Ascending aorta (tissue), 2 donors: ENCODE measurements at regions of chr12 and their contacts with region 1.

Region 1: DNA sequence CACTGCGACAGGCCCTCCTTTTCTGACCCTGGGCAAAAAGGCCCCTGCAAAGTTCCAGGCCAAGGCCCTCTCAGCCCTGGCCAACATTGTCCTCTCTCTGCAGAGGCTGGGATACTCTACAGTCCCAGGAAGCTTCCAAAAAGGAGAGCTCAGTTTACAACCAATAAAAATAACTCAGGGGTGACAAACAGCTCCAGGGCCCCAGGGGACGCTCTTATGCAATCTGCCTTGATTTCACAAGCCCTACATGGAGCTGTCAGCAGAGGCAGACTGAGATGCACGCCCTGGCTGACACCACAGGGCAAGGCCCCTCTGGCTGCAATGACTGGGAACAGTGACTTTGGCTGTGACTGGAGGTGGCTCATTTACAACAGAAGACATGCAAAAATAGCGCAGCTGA is 129.0 kb upstream of the MED13L start:
- DNase-seq: peak; percentile 84 to 97
- H3K4me3 ChIP-seq: no peak overlapping the region
- H3K27ac ChIP-seq: peak overlapping the region; percentile 34 to 60
- H3K4me1 ChIP-seq: peaks cover 8 to 36% of the 10 kb centered on the region in 2 donors
- H3K27me3 ChIP-seq: no peaks in the 10 kb centered on the region
- CTCF ChIP-seq: peak in 1 of 3 experiments; percentile 22

Region 2: GRCh38 chr12:116346741-116347140 is 59.8 kb before region 1 on chr12:
- intact Hi-C with region 1: loop called (anchors 2 kb)
- DNase-seq: peak in 1 of 2 donors; percentile 72
- H3K4me3 ChIP-seq: no peak overlapping the region
- H3K27ac ChIP-seq: no peak overlapping the region
- H3K4me1 ChIP-seq: peaks cover 2 to 15% of the 10 kb centered on the region in 2 donors
- H3K27me3 ChIP-seq: no peaks in the 10 kb centered on the region
- CTCF ChIP-seq: no peak

Region 3: GRCh38 chr12:116389990-116390389 is 16.5 kb before region 1 on chr12:
- intact Hi-C with region 1: loop called (anchors 1 kb)
- DNase-seq: peak in 1 of 2 donors; percentile 78
- H3K4me3 ChIP-seq: no peak overlapping the region
- H3K27ac ChIP-seq: peak overlapping the region; percentile 56 to 61
- H3K4me1 ChIP-seq: peaks cover 11 to 19% of the 10 kb centered on the region in 2 donors
- H3K27me3 ChIP-seq: no peaks in the 10 kb centered on the region
- CTCF ChIP-seq: no peak

Region 4: GRCh38 chr12:116547955-116548501 is 141.5 kb after region 1 on chr12:
- intact Hi-C with region 1: no loop called
- DNase-seq: no peak
- H3K4me3 ChIP-seq: no peak overlapping the region
- H3K27ac ChIP-seq: no peak overlapping the region
- H3K4me1 ChIP-seq: peaks cover 0 to 5% of the 10 kb centered on the region in 2 donors
- H3K27me3 ChIP-seq: no peaks in the 10 kb centered on the region
- CTCF ChIP-seq: no peak